GM13977 (cell line): ENCODE measurements at regions of chr7 and their contacts with region 1.

Region 1: GRCh38 chr7:135281363-135281949 is 47.8 kb downstream of the STRA8 start:
- DNase-seq: peak; percentile 87
- CTCF ChIP-seq: peak; percentile 98

Region 2: DNA sequence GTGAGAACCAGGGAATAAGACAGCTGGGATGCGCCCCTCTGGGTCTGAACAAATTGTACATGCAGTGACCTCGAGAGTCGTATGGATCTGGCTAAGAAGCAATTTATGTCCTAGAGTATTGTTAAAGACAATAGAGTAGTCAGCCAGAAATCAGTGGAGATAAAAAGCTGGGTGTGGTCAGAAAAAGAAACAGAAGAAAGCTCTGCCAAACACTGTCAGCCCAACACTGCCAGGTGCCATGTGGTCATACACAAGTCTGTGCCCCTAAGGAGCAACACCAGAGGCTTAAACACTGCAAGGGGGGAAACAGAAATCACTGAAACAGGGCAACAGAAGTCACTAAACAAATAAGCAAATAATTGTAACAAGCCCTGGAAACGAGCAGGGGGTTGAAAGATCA is 166.3 kb after region 1 on chr7:
- in situ Hi-C with region 1: no loop called
- DNase-seq: no peak
- CTCF ChIP-seq: no peak

Region 3: GRCh38 chr7:135509903-135510602 is 228.6 kb after region 1 on chr7 and contains the start of gene CNOT4:
- in situ Hi-C with region 1: loop called (anchors 25 kb)
- DNase-seq: peak; percentile 92
- CTCF ChIP-seq: no peak

Region 4: DNA sequence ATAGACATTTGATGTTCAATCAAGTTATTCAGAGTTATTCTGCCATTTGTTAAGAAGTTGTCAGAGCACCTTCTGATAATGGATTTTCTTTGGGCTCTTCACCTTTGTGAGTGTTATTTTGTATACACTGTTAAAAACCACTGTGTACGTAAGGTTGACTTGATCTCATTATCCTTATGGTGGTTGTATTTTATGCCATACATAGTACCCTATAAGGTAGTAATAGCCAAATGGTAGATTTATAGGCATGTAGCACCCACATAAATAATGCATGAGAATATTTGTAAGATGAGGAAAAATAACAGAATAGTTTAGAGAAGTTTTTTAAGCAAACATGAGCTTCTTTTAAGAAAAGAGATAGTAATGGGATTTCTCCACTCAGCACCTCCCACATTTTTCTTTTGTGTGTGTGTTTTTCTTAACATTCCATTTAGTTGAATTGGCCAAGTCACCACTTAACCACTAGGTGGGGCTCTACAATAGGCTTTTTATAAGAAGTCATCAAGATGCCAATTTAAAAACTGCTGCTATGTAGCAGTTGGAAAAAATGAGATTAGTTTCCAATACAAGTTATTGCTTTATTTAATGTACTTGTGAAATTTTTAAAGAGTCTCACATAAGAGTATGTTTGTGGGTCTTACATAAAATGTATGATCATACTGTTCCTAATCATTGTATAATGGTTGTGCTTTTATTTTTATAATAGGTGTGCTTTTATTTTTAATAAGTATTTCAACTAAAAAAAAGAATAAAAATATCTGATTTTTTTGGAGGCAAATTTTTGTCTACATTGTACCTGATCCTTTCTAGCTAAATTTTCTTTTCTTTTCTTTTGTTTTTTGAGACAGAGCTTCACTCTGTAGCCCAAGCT is 339.8 kb after region 1 on chr7:
- in situ Hi-C with region 1: loop called (anchors 25 kb)
- DNase-seq: peak; percentile 23
- CTCF ChIP-seq: peak; percentile 73